Kidney (tissue), 22 donors: ENCODE measurements at regions of chr3 and their contacts with region 1.

Region 1: GRCh38 chr3:179309225-179310078 is 13.4 kb upstream of the ZNF639 start:
- DNase-seq: no peak
- H3K4me3 ChIP-seq: no peak overlapping the region
- H3K27ac ChIP-seq: no peak overlapping the region
- H3K4me1 ChIP-seq: no peaks in the 10 kb centered on the region
- H3K27me3 ChIP-seq: no peaks in the 10 kb centered on the region
- CTCF ChIP-seq: no peak

Region 2: DNA sequence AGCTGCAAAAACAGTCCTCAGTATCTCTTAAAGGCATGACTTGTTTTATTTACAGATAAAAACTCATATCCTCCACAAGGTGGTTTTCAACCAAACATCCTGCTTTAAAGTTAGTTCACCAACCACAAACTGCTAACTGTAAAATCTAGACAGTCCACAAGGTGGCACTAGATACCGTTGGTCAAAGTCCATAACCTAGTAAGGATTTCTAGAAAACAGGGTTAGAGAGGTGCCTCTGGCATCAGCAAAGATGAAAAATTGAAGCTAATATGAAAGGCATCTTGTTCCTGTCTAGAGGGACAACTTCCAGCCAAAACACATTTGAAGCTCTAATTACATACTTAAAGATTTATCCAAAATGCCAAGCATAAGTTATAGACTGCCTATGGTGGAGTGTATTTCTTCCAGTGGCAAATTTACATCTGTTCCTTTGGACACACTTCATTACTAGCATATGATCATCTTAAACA is 293.9 kb before region 1 on chr3:
- intact Hi-C with region 1: loop called (anchors 10 kb)
- DNase-seq: peak in 4 of 5 donors; percentile 50 to 88 (median 78)
- H3K4me3 ChIP-seq: no peak overlapping the region
- H3K27ac ChIP-seq: no peak overlapping the region
- H3K4me1 ChIP-seq: peaks cover 0 to under 1% (median 0%) of the 10 kb centered on the region in 3 donors
- H3K27me3 ChIP-seq: no peaks in the 10 kb centered on the region
- CTCF ChIP-seq: peak; percentile 87

Region 3: DNA sequence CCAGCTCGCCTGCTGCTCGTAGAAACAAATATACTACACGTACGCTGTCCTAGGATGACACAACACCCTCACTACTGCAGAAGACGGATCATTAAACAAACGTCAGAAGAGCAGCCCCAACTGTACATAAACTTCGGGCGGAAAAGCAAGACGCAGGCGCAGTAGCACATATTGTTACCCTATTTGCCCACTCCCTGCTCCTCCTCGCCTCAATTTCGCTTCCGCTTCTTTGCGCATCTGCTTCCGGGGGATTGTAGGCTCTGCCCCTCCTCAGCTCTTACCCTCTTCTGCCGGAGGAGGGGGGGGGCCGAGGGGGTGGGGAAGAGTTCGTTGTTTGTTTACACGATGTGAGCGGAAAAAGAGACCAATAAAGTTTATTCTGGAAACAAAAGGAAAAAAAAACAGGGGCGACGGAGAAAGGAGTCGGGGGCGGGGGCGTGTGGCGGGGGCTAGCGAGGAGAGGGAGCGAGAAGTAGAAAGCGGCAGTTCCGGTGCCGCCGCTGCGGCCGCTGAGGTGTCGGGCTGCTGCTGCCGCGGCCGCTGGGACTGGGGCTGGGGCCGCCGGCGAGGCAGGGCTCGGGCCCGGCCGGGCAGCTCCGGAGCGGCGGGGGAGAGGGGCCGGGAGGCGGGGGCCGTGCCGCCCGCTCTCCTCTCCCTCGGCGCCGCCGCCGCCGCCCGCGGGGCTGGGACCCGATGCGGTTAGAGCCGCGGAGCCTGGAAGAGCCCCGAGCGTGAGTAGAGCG is 161.4 kb before region 1 on chr3 and contains the start of gene PIK3CA:
- intact Hi-C with region 1: loop called (anchors 10 kb)
- DNase-seq: peak; percentile 97 to 100 (median 98)
- H3K4me3 ChIP-seq: peak within 1 kb of the TSS; percentile 83 to 97 (median 96)
- H3K27ac ChIP-seq: peak within 1 kb of the TSS; percentile 90 to 95
- H3K4me1 ChIP-seq: peaks cover 0 to 7% (median 3%) of the 10 kb centered on the region in 3 donors
- H3K27me3 ChIP-seq: no peaks in the 10 kb centered on the region
- CTCF ChIP-seq: no peak
- total RNA-seq, gene PIK3CA: 24.8 TPM